HepG2 (cell line): ENCODE measurements at regions of chr7 and their contacts with region 1.

Region 1: GRCh38 chr7:17205910-17206905 is 92.2 kb upstream of the AHR start:
- DNase-seq: peak; percentile 98
- ATAC-seq: peak; percentile 97
- H3K4me3 ChIP-seq: no peak overlapping the region; a peak in 1 of 6 replicates
- H3K27ac ChIP-seq: peak overlapping the region; percentile 76
- H3K4me1 ChIP-seq: peaks cover 38% of the 10 kb centered on the region
- H3K27me3 ChIP-seq: no peaks in the 10 kb centered on the region
- CTCF ChIP-seq: no peak
- EP300 ChIP-seq: peak; percentile 92 to 93; a peak in 3 of 4 replicates
- POLR2A ChIP-seq: no peak
- RAD21 ChIP-seq: no peak

Region 2: DNA sequence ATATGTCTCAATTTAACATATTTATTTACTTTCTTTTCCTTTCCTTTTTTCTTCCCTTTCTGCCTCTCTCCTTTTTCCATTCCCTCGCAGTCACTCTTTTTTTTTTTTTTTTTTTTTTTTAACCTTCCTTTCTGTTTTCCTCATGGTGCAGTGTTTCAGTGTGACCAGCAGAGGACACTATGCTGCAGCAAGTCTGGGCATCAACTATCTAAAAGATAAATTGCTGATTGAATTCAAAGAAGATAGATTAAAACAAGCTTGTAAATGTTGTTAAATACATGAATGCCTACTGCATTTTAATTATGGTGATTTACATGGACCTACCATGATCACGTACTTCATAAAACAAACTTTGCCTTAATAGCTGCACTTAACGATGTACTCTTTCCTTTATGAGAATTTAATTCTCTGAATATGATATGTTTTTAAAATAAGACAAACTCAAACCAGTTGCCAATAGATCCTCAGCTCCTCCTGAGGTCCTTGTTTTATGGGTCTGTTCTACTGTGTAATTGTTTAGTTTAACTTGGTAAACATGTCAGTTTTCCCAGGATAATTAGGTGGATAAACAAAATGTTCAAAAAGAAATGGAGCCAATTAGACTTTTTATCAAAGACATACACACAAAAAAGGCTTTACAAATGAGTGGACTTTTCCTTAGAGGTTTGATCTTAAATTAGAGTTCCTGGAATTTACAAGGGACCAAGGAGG is 223.4 kb before region 1 on chr7:
- CTCF ChIA-PET with region 1: no interaction called
- POLR2A ChIA-PET with region 1: no interaction called
- in situ Hi-C with region 1: no loop called
- intact Hi-C with region 1: loop called (anchors 2 kb)
- DNase-seq: peak; percentile 58
- ATAC-seq: no peak
- H3K4me3 ChIP-seq: no peak overlapping the region
- H3K27ac ChIP-seq: no peak overlapping the region
- H3K4me1 ChIP-seq: peaks cover 54% of the 10 kb centered on the region
- H3K27me3 ChIP-seq: no peaks in the 10 kb centered on the region
- CTCF ChIP-seq: peak; percentile 78
- EP300 ChIP-seq: no peak
- POLR2A ChIP-seq: no peak
- RAD21 ChIP-seq: peak; percentile 75

Region 3: DNA sequence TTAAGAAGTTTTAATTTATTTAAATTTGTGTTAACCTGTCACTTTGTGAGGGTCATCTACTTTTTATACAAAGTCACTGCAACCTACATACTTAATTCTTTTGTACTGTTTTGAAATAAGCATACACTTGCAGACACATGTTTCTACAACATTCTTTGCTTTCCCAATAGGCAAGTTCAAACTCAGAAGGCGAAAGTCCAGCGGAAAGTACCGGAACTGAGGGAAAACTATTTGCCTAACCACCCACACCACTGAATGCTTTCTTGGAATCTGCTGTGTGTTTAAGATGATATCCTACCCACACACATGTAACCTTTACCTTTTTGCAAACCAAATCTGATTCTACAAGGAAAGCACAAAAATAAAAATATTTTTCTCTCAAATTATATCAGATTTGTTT is 185.0 kb before region 1 on chr7:
- CTCF ChIA-PET with region 1: no interaction called
- POLR2A ChIA-PET with region 1: no interaction called
- in situ Hi-C with region 1: no loop called
- intact Hi-C with region 1: loop called (anchors 2 kb)
- DNase-seq: peak; percentile 95
- ATAC-seq: peak; percentile 86
- H3K4me3 ChIP-seq: no peak overlapping the region
- H3K27ac ChIP-seq: peak overlapping the region; percentile 81
- H3K4me1 ChIP-seq: peaks cover 52% of the 10 kb centered on the region
- H3K27me3 ChIP-seq: no peaks in the 10 kb centered on the region
- CTCF ChIP-seq: no peak
- EP300 ChIP-seq: peak; percentile 87 to 99
- POLR2A ChIP-seq: no peak
- RAD21 ChIP-seq: no peak

Region 4: GRCh38 chr7:17130281-17131059 is 75.7 kb before region 1 on chr7:
- CTCF ChIA-PET with region 1: no interaction called
- POLR2A ChIA-PET with region 1: interaction called, 3 read pairs
- in situ Hi-C with region 1: no loop called
- intact Hi-C with region 1: loop called (anchors 2 kb)
- DNase-seq: peak; percentile 98
- ATAC-seq: peak; percentile 96
- H3K4me3 ChIP-seq: peak overlapping the region in 2 of 3 experiments; percentile 20 to 23; a peak in 2 of 6 replicates
- H3K27ac ChIP-seq: peak overlapping the region; percentile 86
- H3K4me1 ChIP-seq: peaks cover 91% of the 10 kb centered on the region
- H3K27me3 ChIP-seq: no peaks in the 10 kb centered on the region
- CTCF ChIP-seq: no peak
- EP300 ChIP-seq: peak; percentile 80 to 98
- POLR2A ChIP-seq: no peak
- RAD21 ChIP-seq: no peak

Region 5: DNA sequence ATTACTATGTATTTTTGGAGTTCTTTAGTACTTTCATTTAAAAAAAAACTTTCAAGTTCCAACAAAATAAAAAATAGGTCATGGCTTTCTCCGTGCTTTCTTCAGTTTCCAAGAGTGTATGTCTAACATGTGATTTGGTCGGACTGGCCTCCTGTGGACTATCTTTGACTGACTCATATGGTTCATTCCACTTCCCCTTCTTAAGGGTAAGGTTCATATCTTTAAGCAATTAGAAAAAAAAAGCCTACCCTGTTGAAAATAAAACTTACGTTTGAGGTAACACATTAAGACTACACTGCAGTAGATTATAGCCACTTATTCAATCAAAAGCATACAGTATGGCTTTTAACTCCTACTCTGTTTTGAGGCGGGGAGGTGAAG is 20.5 kb before region 1 on chr7:
- CTCF ChIA-PET with region 1: no interaction called
- POLR2A ChIA-PET with region 1: no interaction called
- in situ Hi-C with region 1: no loop called
- intact Hi-C with region 1: loop called (anchors 1 kb)
- DNase-seq: no peak
- ATAC-seq: no peak
- H3K4me3 ChIP-seq: no peak overlapping the region
- H3K27ac ChIP-seq: peak overlapping the region; percentile 83
- H3K4me1 ChIP-seq: peaks cover 43% of the 10 kb centered on the region
- H3K27me3 ChIP-seq: no peaks in the 10 kb centered on the region
- CTCF ChIP-seq: no peak
- EP300 ChIP-seq: no peak
- POLR2A ChIP-seq: no peak
- RAD21 ChIP-seq: no peak

Region 6: GRCh38 chr7:17269341-17270221 is 63.4 kb after region 1 on chr7:
- CTCF ChIA-PET with region 1: no interaction called
- POLR2A ChIA-PET with region 1: no interaction called
- in situ Hi-C with region 1: no loop called
- intact Hi-C with region 1: no loop called
- DNase-seq: no peak
- ATAC-seq: no peak
- H3K4me3 ChIP-seq: no peak overlapping the region
- H3K27ac ChIP-seq: no peak overlapping the region
- H3K4me1 ChIP-seq: no peaks in the 10 kb centered on the region
- H3K27me3 ChIP-seq: no peaks in the 10 kb centered on the region
- CTCF ChIP-seq: no peak
- EP300 ChIP-seq: no peak
- POLR2A ChIP-seq: no peak
- RAD21 ChIP-seq: no peak

Region 7: DNA sequence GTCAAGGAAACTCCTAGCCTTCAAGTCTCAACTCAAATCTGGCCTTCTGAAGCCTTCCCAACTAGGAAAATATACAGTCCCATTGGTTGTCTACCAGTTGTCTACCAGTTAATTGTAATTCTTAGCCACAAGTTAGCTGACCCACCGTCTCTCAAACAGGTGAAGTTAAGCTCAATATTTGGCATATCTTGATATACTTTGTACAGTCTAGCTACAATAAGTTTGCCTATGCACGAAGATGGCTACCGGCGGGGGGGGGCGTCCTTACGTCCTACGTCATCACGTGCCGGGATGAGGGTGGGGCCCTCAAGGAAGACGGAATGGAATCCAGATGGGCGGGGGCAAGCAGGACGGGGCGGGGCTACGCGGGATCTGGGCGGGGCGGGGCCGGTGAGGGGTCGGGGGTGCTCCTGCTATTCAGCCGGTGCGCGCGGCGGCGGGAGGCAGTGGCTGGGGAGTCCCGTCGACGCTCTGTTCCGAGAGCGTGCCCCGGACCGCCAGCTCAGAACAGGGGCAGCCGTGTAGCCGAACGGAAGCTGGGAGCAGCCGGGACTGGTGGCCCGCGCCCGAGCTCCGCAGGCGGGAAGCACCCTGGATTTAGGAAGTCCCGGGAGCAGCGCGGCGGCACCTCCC is 92.1 kb after region 1 on chr7 and contains the start of gene AHR:
- CTCF ChIA-PET with region 1: no interaction called
- POLR2A ChIA-PET with region 1: interaction called, 9 read pairs
- in situ Hi-C with region 1: no loop called
- intact Hi-C with region 1: loop called (anchors 1 kb)
- DNase-seq: peak; percentile 86
- ATAC-seq: peak; percentile 94
- H3K4me3 ChIP-seq: peak within 1 kb of the TSS; percentile 78 to 95 (median 82)
- H3K27ac ChIP-seq: peak within 1 kb of the TSS; percentile 83
- H3K4me1 ChIP-seq: peaks cover 24% of the 10 kb centered on the region
- H3K27me3 ChIP-seq: peaks cover 0 to 2% of the 10 kb centered on the region in 2 experiments; a peak in 1 of 5 replicates
- CTCF ChIP-seq: no peak
- EP300 ChIP-seq: 0 out of 4 replicates have a peak, but pooled peaks of 1 of the 2 experiments have one; percentile 6
- POLR2A ChIP-seq: peak; percentile 88 to 97
- RAD21 ChIP-seq: peak; percentile 53; the same call in 1 of the 2 replicates
- total RNA-seq, gene AHR: 31.3 and 34.1 TPM in 2 replicates

Region 8: GRCh38 chr7:17706734-17707133 is 500.5 kb after region 1 on chr7:
- CTCF ChIA-PET with region 1: no interaction called
- POLR2A ChIA-PET with region 1: no interaction called
- in situ Hi-C with region 1: no loop called
- intact Hi-C with region 1: no loop called
- DNase-seq: peak; percentile 46
- ATAC-seq: peak; percentile 89
- H3K4me3 ChIP-seq: no peak overlapping the region
- H3K27ac ChIP-seq: no peak overlapping the region
- H3K4me1 ChIP-seq: no peaks in the 10 kb centered on the region
- H3K27me3 ChIP-seq: no peaks in the 10 kb centered on the region
- CTCF ChIP-seq: peak; percentile 77
- EP300 ChIP-seq: no peak
- POLR2A ChIP-seq: no peak
- RAD21 ChIP-seq: 0 out of 2 replicates have a peak, but pooled peaks have one; percentile 37